ENCODE measurements at regions of chr20 and their contacts with region 1.

Region 1: DNA sequence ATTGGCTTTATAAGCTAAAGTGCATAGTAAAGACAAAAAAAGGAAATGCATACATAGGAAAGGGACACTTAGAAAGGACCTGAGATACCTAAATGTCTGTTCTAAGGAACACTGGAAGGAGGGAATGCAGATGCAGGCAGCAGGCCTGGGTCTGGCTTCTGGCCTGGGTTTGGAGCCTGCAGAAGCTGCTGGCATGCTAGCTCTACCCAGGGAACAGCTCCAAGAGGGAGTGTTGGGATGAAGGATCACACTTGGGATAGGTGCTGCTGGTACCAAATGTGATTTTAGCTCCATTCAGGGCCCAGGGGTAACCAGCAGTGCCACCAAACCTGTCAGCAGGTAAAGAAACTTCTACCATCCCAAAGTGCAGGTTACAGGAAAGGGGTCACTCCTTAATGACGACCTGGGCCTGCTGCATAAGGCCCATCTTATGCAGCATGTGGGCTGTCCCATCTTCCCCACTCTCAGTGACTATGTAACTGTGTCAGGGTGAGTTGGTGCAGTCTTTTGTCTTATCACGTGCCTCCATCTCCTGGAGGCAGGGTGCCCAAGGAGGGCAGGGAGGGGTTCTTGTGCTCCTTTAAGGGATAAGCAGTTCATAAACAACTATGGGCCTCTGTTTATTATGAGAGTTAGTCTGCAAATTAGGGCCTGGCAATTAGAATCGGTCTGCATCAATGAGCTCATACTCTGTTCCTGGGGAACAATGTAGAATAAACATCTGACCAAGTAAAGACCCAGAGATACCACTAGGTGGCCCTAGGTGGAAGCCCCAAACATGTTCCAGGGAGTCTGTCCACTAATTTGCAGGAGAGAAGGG is 26.9 kb downstream of the DDX27 start:
- DNase-seq: peak in 5 of 9 donors; percentile 17 to 37 (median 20)
- ATAC-seq: peak; percentile 77
- H3K4me3 ChIP-seq: no peak overlapping the region
- H3K4me3 Mint-ChIP-seq: no peak overlapping the region
- H3K27ac ChIP-seq: peak overlapping the region; percentile 18
- H3K27ac Mint-ChIP-seq: peak overlapping the region in 8 of 9 donors; percentile 1 to 84 (median 62)
- H3K4me1 ChIP-seq: peaks cover 0 to 6% of the 10 kb centered on the region in 2 donors
- H3K4me1 Mint-ChIP-seq: peaks cover 4 to 13% (median 5%) of the 10 kb centered on the region in 7 donors
- H3K27me3 ChIP-seq: no peaks in the 10 kb centered on the region
- H3K27me3 Mint-ChIP-seq: no peaks in the 10 kb centered on the region

Region 2: GRCh38 chr20:49323622-49324238 is 77.6 kb after region 1 on chr20:
- CTCF ChIA-PET with region 1: interaction called, 4 read pairs
- POLR2A ChIA-PET with region 1: no interaction called
- intact Hi-C with region 1: loop called in 1 of 2 experiments (anchors 1 kb)
- DNase-seq: peak in 8 of 9 donors; percentile 22 to 51 (median 34)
- ATAC-seq: peak; percentile 88
- H3K4me3 ChIP-seq: no peak overlapping the region
- H3K4me3 Mint-ChIP-seq: peak overlapping the region in 2 of 10 donors; percentile 32 to 47
- H3K27ac ChIP-seq: no peak overlapping the region
- H3K27ac Mint-ChIP-seq: peak overlapping the region in 1 of 9 donors; percentile 59
- H3K4me1 ChIP-seq: peaks cover 5 to 12% of the 10 kb centered on the region in 2 donors
- H3K4me1 Mint-ChIP-seq: peaks cover 7 to 29% (median 26%) of the 10 kb centered on the region in 7 donors
- H3K27me3 ChIP-seq: peaks cover 7 to 21% of the 10 kb centered on the region in 2 donors
- H3K27me3 Mint-ChIP-seq: peaks cover 23 to 62% (median 37%) of the 10 kb centered on the region in 5 donors

Region 3: DNA sequence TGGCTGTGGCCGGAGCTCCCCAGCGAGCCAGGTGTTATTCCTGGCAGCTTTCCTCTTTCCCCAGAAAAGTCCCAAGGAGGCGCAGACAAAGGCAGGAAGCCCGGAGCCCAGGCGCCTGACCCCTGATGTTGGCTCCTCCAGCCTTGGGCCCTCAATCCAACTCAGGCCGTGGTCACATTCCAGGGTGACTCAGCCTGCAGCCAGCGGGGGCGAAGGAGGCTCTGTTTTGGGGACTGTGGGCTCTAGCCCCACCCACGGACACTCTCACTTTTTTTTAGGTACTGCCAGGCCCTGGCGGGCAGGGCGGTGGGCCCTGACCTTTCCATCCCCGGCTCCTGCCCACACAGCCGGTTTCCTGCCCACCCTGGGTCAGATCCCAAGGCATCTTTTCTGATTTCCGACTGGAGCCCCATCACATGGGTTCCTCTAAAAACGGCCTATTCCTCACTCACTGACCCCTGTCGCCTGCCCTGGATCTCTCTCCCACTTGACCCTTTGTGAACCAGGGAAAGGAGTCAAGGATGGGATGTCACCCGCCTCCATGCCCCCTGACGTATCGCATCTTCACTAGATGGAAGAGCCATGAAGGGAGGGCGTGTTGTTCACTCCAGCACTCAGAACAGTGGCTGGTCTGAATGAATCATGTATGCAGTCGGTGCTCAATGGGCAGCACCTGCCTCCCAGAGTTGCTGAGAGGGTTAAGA is 316.3 kb after region 1 on chr20:
- CTCF ChIA-PET with region 1: no interaction called
- POLR2A ChIA-PET with region 1: no interaction called
- intact Hi-C with region 1: no loop called
- DNase-seq: no peak
- ATAC-seq: no peak
- H3K4me3 ChIP-seq: no peak overlapping the region
- H3K4me3 Mint-ChIP-seq: no peak overlapping the region
- H3K27ac ChIP-seq: no peak overlapping the region
- H3K27ac Mint-ChIP-seq: peak overlapping the region in 2 of 9 donors; percentile 23 to 42
- H3K4me1 ChIP-seq: no peaks in the 10 kb centered on the region
- H3K4me1 Mint-ChIP-seq: peaks cover 0 to 32% (median 0%) of the 10 kb centered on the region in 7 donors
- H3K27me3 ChIP-seq: no peaks in the 10 kb centered on the region
- H3K27me3 Mint-ChIP-seq: peaks cover 45 to 72% (median 55%) of the 10 kb centered on the region in 5 donors

Measured in naive thymus-derived CD4-positive, alpha-beta T cell (primary cell).